Caco-2 (cell line): ENCODE measurements at regions of chr21 and their contacts with region 1.

Region 1: GRCh38 chr21:26945916-26946675 is 20.8 kb downstream of the ADAMTS5 start:
- DNase-seq: no peak
- H3K4me3 ChIP-seq: no peak overlapping the region
- H3K4me3 Mint-ChIP-seq: no peak overlapping the region
- H3K27ac Mint-ChIP-seq: no peak overlapping the region
- H3K4me1 ChIP-seq: no peaks in the 10 kb centered on the region
- H3K4me1 Mint-ChIP-seq: no peaks in the 10 kb centered on the region
- H3K27me3 ChIP-seq: no peaks in the 10 kb centered on the region; the same call in 1 of the 2 replicates
- H3K27me3 Mint-ChIP-seq: peaks cover 6% of the 10 kb centered on the region
- CTCF ChIP-seq: no peak

Region 2: DNA sequence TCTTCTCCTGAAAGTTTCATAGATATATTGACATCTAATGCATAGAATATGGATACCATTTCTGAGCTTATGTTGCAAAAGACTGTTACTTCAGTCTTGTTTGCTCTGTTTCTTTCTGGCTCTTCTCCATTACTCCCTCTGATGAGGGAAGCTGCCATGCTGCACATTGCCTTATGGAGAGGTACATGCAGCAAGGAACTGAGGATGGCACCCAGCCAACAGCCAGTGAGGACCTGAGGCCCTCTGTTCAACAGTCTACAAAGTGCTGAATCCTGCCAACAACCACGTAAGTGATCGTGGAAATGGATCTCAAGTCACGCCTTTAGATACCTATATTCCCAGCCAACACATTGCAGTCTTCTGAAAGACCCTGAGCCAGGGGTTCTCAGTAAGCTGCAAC is 87.4 kb after region 1 on chr21:
- CTCF ChIA-PET with region 1: no interaction called
- POLR2A ChIA-PET with region 1: no interaction called
- intact Hi-C with region 1: loop called (anchors 10 kb)
- DNase-seq: no peak
- H3K4me3 ChIP-seq: no peak overlapping the region
- H3K4me3 Mint-ChIP-seq: no peak overlapping the region
- H3K27ac Mint-ChIP-seq: no peak overlapping the region
- H3K4me1 ChIP-seq: no peaks in the 10 kb centered on the region
- H3K4me1 Mint-ChIP-seq: no peaks in the 10 kb centered on the region
- H3K27me3 ChIP-seq: no peaks in the 10 kb centered on the region
- H3K27me3 Mint-ChIP-seq: peaks cover 9% of the 10 kb centered on the region
- CTCF ChIP-seq: no peak

Region 3: GRCh38 chr21:27047283-27047657 is 101.2 kb after region 1 on chr21:
- CTCF ChIA-PET with region 1: no interaction called
- POLR2A ChIA-PET with region 1: no interaction called
- intact Hi-C with region 1: no loop called
- DNase-seq: no peak
- H3K4me3 ChIP-seq: no peak overlapping the region
- H3K4me3 Mint-ChIP-seq: no peak overlapping the region
- H3K27ac Mint-ChIP-seq: no peak overlapping the region
- H3K4me1 ChIP-seq: no peaks in the 10 kb centered on the region
- H3K4me1 Mint-ChIP-seq: no peaks in the 10 kb centered on the region
- H3K27me3 ChIP-seq: no peaks in the 10 kb centered on the region
- H3K27me3 Mint-ChIP-seq: peaks cover 3% of the 10 kb centered on the region
- CTCF ChIP-seq: no peak